HCT116 (cell line): ENCODE measurements at regions of chr11 and their contacts with region 1.

Region 1: GRCh38 chr11:61516675-61517572 is 8.4 kb downstream of the LRRC10B start:
- DNase-seq: no peak
- ATAC-seq: peak; percentile 75
- H3K4me3 ChIP-seq: no peak overlapping the region
- H3K27ac ChIP-seq: no peak overlapping the region
- H3K4me1 ChIP-seq: peaks cover 8 to 14% of the 10 kb centered on the region in 2 experiments; a peak in 2 of 4 replicates
- H3K27me3 ChIP-seq: no peaks in the 10 kb centered on the region
- CTCF ChIP-seq: peak; percentile 81 to 99 (median 98)
- POLR2A ChIP-seq: no peak
- RAD21 ChIP-seq: peak; percentile 82

Region 2: GRCh38 chr11:61477727-61478148 is 39.2 kb before region 1 on chr11:
- CTCF ChIA-PET with region 1: interaction called, 21 read pairs
- POLR2A ChIA-PET with region 1: no interaction called
- RAD21 ChIA-PET with region 1: interaction called, 4 to 5 read pairs
- intact Hi-C with region 1: loop called (anchors 1 kb)
- DNase-seq: no peak
- ATAC-seq: peak; percentile 54
- H3K4me3 ChIP-seq: no peak overlapping the region
- H3K27ac ChIP-seq: no peak overlapping the region
- H3K4me1 ChIP-seq: 0 out of 4 replicates have a peak, but pooled peaks cover 0 to 3% of the 10 kb centered on the region in 2 experiments
- H3K27me3 ChIP-seq: no peaks in the 10 kb centered on the region
- CTCF ChIP-seq: peak; percentile 87 to 93 (median 90)
- POLR2A ChIP-seq: no peak
- RAD21 ChIP-seq: peak; percentile 94

Region 3: DNA sequence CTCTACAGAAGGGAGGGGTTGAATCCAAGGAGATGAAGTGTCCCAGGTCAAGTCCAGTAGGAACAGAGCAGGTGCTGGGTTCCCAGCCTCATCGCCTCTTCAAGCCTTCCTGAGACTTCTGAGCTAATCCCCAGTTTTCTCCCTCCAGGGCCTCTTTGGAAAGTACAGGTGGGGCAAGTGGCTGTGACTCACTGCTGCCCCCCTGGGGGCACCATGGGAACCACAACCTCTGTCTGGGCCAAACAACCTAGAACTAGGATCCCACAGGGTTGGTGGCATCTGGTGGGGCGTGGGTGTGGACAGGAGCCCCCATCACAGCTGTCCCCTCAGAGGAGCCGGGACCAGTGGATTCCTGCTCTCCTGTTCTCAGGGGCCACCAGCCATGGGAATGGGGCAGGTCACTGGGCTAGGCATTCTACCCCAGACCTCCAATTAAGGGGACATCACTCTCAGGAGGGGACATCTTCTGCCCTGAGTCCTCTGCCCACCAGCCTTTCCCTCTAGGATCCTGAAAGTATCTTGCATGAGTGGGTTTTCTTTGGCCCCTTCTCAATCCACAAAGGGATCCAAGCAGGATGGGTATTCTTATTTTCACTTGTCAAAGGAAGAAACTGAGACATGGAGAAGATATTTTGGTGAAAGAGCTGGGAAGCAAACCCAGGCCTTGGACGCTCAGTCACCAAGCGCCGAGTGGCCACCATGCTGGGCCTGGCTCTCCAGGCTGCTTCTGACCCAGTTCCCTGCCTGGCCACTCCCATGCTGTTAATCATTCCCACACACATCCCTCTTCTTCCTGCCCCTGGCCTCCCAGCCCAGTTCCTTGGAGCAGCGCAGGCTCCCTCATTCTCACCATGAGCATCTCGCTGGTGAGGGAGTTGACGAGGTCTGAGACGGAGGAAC is 15.5 kb after region 1 on chr11:
- CTCF ChIA-PET with region 1: interaction called, 11 read pairs
- POLR2A ChIA-PET with region 1: no interaction called
- RAD21 ChIA-PET with region 1: no interaction called
- intact Hi-C with region 1: no loop called
- DNase-seq: no peak
- ATAC-seq: peak; percentile 93
- H3K4me3 ChIP-seq: no peak overlapping the region
- H3K27ac ChIP-seq: no peak overlapping the region
- H3K4me1 ChIP-seq: peaks cover 0 to 9% of the 10 kb centered on the region in 2 experiments; a peak in 2 of 4 replicates
- H3K27me3 ChIP-seq: no peaks in the 10 kb centered on the region
- CTCF ChIP-seq: peak; percentile 78 to 98 (median 93); a peak in 5 of 6 replicates
- POLR2A ChIP-seq: no peak
- RAD21 ChIP-seq: peak; percentile 58